Psoas muscle (tissue), 8 donors: ENCODE measurements at regions of chr9 and their contacts with region 1.

Region 1: DNA sequence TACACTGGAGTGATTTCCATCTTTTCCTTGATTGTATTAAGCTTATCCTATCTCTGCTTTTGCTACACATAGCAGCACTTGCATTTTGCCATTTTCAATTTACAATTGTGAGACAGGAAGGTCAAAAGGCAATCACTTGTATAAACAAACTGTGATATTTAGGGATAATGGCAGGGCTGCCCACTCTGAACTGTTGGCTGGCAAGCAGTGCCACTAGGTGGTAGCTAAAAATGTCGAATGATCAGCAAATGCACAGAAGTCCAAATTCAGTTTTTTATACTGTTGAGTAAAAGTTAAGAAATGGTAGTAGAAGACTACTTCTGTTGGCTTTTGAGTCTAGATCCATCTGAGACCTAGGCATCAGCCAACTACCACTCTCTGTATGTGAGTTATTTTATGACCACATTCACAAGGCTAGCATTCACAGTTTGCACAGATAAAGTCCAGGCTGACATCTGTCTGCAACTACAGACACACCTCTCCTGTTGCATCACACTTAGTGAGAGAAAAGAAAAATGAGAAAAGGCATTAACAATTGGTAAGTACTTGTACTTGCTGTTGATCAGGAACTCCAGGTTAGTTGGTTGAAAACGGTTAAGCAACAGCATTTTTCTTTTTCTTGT is 108.8 kb upstream of the ASTN2 start:
- DNase-seq: no peak
- ATAC-seq: no peak
- H3K4me3 ChIP-seq: no peak overlapping the region
- H3K27ac ChIP-seq: no peak overlapping the region
- H3K4me1 ChIP-seq: no peaks in the 10 kb centered on the region
- H3K27me3 ChIP-seq: no peaks in the 10 kb centered on the region
- CTCF ChIP-seq: no peak

Region 2: DNA sequence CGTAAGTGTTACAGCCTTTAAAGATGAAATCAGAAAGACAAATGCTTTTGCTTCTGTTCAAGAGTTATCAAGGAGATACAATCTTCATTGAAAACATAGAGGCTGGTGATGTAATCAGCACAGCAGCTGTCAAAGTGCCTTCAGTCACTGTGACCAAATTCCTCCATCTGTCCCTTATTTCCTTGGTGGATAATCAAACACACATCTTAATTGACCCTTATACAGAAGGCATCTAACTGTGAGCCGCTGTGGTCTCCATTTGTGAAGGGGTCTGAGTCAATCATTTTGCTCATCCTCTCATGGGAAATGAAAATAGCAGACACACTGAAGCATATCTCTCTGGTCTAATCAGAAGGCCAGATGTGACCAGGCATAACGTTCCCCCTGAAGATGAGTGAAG is 50.5 kb after region 1 on chr9:
- intact Hi-C with region 1: loop called in 1 of 2 experiments (anchors 5 kb)
- DNase-seq: no peak
- ATAC-seq: no peak
- H3K4me3 ChIP-seq: no peak overlapping the region
- H3K27ac ChIP-seq: no peak overlapping the region
- H3K4me1 ChIP-seq: no peaks in the 10 kb centered on the region
- H3K27me3 ChIP-seq: peaks cover 0 to 3% (median 0%) of the 10 kb centered on the region in 3 donors
- CTCF ChIP-seq: no peak